ENCODE measurements at regions of chr5 and their contacts with region 1.

Region 1: GRCh38 chr5:132272311-132273210 is 15.1 kb downstream of the PDLIM4 start:
- DNase-seq: peak; percentile 74
- H3K4me3 Mint-ChIP-seq: no peak overlapping the region
- H3K27ac Mint-ChIP-seq: no peak overlapping the region
- H3K4me1 Mint-ChIP-seq: peaks cover 8% of the 10 kb centered on the region
- H3K27me3 Mint-ChIP-seq: peaks cover 51% of the 10 kb centered on the region

Region 2: DNA sequence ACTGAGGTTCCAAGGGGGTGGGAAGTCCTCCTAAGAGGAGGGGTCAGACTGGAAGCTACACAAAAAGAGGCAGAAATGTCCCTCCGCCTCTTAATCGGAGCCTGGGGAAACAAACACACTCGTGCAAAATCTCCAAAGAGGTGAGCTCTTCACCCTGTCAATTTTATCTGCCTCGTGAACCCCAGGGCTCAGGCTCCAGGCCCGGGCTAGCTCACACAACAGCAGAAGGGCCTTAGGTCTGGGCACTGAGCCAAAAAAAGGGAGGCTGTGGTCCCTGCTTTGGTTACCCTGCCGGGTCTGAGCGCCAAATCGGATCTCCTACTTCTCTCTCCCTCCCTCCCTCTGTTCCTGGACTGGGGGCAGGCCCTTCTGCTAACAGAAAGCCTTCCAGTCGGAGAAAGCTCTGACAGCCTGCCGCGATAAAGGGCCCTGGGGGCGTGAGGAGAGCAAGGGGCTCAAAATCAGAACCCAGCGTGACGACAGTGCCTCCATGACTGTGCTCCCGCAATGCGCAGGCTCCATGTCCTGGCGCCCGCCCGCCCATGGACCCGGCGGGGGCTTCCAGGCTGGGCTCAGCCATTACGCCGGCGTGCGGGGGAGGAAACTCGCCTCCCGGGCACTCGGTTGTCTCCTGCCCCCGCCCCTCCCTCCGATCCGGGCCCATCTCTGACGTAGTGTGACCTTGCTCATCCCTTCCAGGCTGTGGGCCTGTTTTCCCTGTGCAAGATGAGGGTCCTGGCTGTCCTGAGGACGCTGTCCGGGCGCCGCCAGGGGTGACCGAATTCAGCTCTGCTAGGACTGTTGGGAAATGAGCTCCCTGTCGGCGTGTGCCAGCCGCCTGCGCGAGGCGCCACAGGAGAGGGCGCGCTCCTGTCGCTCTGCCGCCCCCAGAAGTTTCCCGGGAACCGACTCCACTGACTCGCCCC is 20.8 kb after region 1 on chr5:
- CTCF ChIA-PET with region 1: interaction called, 12 read pairs
- DNase-seq: peak; percentile 67
- H3K4me3 Mint-ChIP-seq: peak overlapping the region; percentile 83
- H3K27ac Mint-ChIP-seq: no peak overlapping the region
- H3K4me1 Mint-ChIP-seq: peaks cover 17% of the 10 kb centered on the region
- H3K27me3 Mint-ChIP-seq: peaks cover 63% of the 10 kb centered on the region

Region 3: GRCh38 chr5:132369474-132370180 is 97.1 kb after region 1 on chr5 and contains the start of gene SLC22A5:
- CTCF ChIA-PET with region 1: interaction called, 10 read pairs
- DNase-seq: peak; percentile 77
- H3K4me3 Mint-ChIP-seq: peak within 1 kb of the TSS; percentile 76
- H3K27ac Mint-ChIP-seq: no peak within 1 kb of the TSS
- H3K4me1 Mint-ChIP-seq: peaks cover 29% of the 10 kb centered on the region
- H3K27me3 Mint-ChIP-seq: peaks cover 9% of the 10 kb centered on the region

Region 4: GRCh38 chr5:132426525-132427138 is 154.1 kb after region 1 on chr5:
- CTCF ChIA-PET with region 1: no interaction called
- DNase-seq: peak; percentile 81
- H3K4me3 Mint-ChIP-seq: peak overlapping the region; percentile 56
- H3K27ac Mint-ChIP-seq: peak overlapping the region; percentile 98
- H3K4me1 Mint-ChIP-seq: peaks cover 100% of the 10 kb centered on the region
- H3K27me3 Mint-ChIP-seq: no peaks in the 10 kb centered on the region

Measured in activated naive CD4-positive, alpha-beta T cell treated with anti-CD3 and anti-CD28 coated beads, Interleukin-2, amount 10 ng/mL, durations not matched to agents 7 days and 5 days (primary cell).